H1 (cell line): ENCODE measurements at regions of chr5 and their contacts with region 1.

Region 1: DNA sequence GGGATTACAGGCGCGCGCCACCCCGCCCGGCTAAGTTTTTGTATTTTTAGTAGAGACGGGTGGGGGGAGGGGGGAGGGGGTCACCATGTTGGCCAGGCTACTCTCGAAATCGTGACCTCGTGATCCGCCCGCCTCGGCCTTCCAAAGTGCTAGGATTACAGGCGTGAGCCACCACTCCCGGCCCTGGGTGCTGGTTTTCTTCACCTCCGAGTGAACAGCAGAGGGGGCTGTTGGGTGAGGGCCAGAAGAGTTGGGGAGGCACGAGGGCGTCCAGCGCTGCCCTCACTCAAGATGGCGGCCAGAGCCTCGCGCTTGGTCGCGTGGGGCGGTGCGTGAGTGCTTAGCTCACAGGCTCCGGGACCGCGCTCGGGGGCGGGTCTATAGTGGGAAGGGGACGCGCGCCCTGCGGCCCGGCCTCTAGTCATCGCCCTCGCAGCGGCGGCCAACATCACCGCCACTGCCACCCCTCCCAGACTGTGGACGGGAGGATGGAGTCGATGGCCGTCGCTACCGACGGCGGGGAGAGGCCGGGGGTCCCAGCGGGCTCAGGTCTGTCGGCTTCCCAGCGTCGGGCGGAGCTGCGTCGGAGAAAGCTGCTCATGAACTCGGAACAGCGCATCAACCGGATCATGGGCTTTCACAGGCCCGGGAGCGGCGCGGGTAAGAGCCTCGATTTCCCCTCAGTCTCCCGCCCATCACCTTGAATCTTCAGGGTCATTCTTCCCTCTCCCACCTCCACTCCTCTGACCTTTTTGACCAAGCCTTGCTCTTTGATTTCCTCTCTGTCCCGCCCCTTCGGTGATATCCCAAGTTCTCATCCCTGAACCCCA is at the start of gene CAMLG:
- DNase-seq: peak; percentile 96 to 97
- H3K4me3 ChIP-seq: peak within 1 kb of the TSS; percentile 75 to 97 (median 84)
- H3K27ac ChIP-seq: peak within 1 kb of the TSS; percentile 87
- H3K4me1 ChIP-seq: no peaks in the 10 kb centered on the region
- H3K27me3 ChIP-seq: no peaks in the 10 kb centered on the region
- CTCF ChIP-seq: peak; percentile 63 to 83 (median 72)
- EP300 ChIP-seq: no peak
- POLR2A ChIP-seq: peak; percentile 65 to 84
- RAD21 ChIP-seq: peak; percentile 36 to 57; a peak in 3 of 4 replicates
- total RNA-seq, gene CAMLG: 42.0 and 42.8 TPM in 2 replicates

Region 2: GRCh38 chr5:134714120-134714519 is 24.2 kb before region 1 on chr5:
- CTCF ChIA-PET with region 1: interaction called, 8 read pairs
- POLR2A ChIA-PET with region 1: interaction called, 10 read pairs
- DNase-seq: no peak
- H3K4me3 ChIP-seq: no peak overlapping the region
- H3K27ac ChIP-seq: no peak overlapping the region
- H3K4me1 ChIP-seq: no peaks in the 10 kb centered on the region
- H3K27me3 ChIP-seq: no peaks in the 10 kb centered on the region
- CTCF ChIP-seq: no peak
- EP300 ChIP-seq: no peak
- POLR2A ChIP-seq: no peak
- RAD21 ChIP-seq: no peak

Region 3: GRCh38 chr5:134749415-134749814 is 11.1 kb after region 1 on chr5:
- CTCF ChIA-PET with region 1: interaction called, 8 read pairs
- POLR2A ChIA-PET with region 1: interaction called, 14 read pairs
- DNase-seq: no peak
- H3K4me3 ChIP-seq: no peak overlapping the region
- H3K27ac ChIP-seq: no peak overlapping the region
- H3K4me1 ChIP-seq: no peaks in the 10 kb centered on the region
- H3K27me3 ChIP-seq: no peaks in the 10 kb centered on the region
- CTCF ChIP-seq: no peak
- EP300 ChIP-seq: no peak
- POLR2A ChIP-seq: no peak
- RAD21 ChIP-seq: no peak

Region 4: GRCh38 chr5:134758504-134759341 is 20.4 kb after region 1 on chr5 and contains the start of gene DDX46:
- CTCF ChIA-PET with region 1: interaction called, 26 read pairs
- POLR2A ChIA-PET with region 1: interaction called, 31 read pairs
- DNase-seq: peak; percentile 80 to 97
- H3K4me3 ChIP-seq: peak within 1 kb of the TSS; percentile 77 to 98 (median 94)
- H3K27ac ChIP-seq: peak within 1 kb of the TSS; percentile 89
- H3K4me1 ChIP-seq: peaks cover 0 to 2% (median 0%) of the 10 kb centered on the region in 4 experiments; a peak in 4 of 7 replicates
- H3K27me3 ChIP-seq: no peaks in the 10 kb centered on the region; a peak in 1 of 7 replicates
- CTCF ChIP-seq: peak; percentile 81 to 90 (median 81)
- EP300 ChIP-seq: no peak
- POLR2A ChIP-seq: peak; percentile 94
- RAD21 ChIP-seq: no peak; a peak in 1 of 4 replicates
- total RNA-seq, gene DDX46: 100.0 and 110 TPM in 2 replicates

Region 5: GRCh38 chr5:134833340-134834032 is 95.1 kb after region 1 on chr5:
- CTCF ChIA-PET with region 1: no interaction called
- POLR2A ChIA-PET with region 1: no interaction called
- DNase-seq: no peak
- H3K4me3 ChIP-seq: no peak overlapping the region
- H3K27ac ChIP-seq: no peak overlapping the region
- H3K4me1 ChIP-seq: no peaks in the 10 kb centered on the region
- H3K27me3 ChIP-seq: no peaks in the 10 kb centered on the region
- CTCF ChIP-seq: no peak
- EP300 ChIP-seq: no peak
- POLR2A ChIP-seq: no peak
- RAD21 ChIP-seq: no peak